ENCODE measurements at regions of chr1 and their contacts with region 1.

Region 1: DNA sequence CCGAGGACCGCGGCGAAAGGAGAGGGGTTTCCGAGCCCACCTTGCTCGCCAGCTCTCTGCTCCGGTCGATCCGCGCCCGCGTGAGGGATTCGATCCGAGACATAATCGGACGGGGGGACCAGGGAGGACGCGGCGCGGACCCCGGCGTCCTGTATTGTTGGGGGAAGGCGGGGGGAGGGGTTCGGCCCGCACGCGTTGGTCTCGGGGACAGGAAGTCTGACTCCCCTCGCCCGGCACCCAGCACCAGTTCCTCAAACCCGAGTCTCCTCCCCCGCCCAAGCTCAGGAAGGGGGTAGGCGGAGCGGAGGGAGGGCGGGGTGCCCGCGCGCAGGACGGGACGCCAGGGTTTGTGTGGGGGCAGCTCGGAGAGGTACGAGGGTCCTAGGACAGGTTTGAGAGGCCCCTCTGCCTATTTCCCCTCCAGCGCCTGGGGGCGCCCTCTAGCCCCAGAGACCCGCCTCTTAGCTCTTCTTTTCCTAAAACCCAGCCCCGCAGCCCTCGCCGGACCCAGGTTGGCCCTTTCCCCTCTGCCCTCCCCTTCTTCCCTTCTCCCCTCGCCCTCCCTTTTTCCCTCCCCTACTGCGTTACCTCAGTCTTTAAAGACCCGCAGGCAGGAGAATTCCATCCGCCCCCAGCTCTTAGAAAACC is at the start of gene ARHGEF2:
- DNase-seq: peak; percentile 80

Region 2: DNA sequence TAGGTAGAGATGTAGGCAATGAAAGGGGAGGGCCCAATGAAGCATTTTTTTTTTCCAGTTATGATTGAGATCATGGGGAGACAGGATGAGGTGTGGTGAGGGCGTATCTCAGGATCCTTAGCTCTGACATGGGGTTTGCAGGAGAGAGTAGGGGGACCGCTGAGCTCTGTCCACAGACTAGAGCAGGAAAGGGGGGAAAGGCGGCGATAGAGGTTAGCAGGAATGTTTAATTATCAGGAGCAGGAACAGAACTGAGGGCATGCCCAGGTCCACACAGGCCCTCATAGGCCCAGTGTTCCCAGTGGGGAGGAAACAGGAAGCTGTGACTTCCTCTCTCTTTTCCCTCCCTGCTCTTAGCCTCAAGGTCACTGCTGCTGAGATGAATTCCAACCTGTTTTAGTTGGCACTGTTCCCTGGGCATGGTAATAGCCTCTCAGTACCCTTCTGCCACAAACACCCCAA is 37.9 kb before region 1 on chr1:
- CTCF ChIA-PET with region 1: interaction called, 14 read pairs
- POLR2A ChIA-PET with region 1: interaction called, 79 read pairs
- DNase-seq: no peak

Region 3: GRCh38 chr1:155946633-155947219 is 31.7 kb before region 1 on chr1:
- CTCF ChIA-PET with region 1: interaction called, 3 read pairs
- POLR2A ChIA-PET with region 1: interaction called, 10 read pairs
- DNase-seq: no peak

Region 4: GRCh38 chr1:155989242-155990004 is 11.0 kb after region 1 on chr1:
- CTCF ChIA-PET with region 1: interaction called, 39 read pairs
- POLR2A ChIA-PET with region 1: interaction called, 12 read pairs
- DNase-seq: peak; percentile 87